Naive thymus-derived CD4-positive, alpha-beta T cell (primary cell): ENCODE measurements at regions of chrX and their contacts with region 1.

Region 1: DNA sequence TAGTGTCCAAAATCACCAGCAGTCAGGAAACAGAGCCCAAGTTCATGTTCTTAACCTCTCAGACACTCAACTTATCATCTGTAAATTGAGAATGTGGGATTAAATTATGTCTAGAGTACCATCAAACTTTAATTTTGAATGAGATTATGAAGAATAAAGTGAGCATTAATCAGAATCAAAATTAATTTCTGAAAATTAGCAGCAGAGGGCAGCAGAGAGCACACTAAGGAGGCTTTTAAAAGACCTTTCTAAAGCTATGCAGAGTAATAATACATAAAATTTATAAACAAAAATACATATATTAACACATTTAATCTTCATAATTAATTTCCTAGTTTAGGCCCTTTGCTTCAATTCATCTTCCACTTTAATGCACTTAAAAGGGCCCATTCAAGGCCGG is 7.1 kb downstream of the TASL start:
- DNase-seq: peak in 4 of 9 donors; percentile 13 to 33 (median 28)
- ATAC-seq: peak; percentile 56
- H3K4me3 ChIP-seq: no peak overlapping the region
- H3K4me3 Mint-ChIP-seq: no peak overlapping the region
- H3K27ac ChIP-seq: no peak overlapping the region
- H3K27ac Mint-ChIP-seq: peak overlapping the region in 1 of 9 donors; percentile 42
- H3K4me1 ChIP-seq: no peaks in the 10 kb centered on the region
- H3K4me1 Mint-ChIP-seq: peaks cover 9 to 32% (median 17%) of the 10 kb centered on the region in 7 donors
- H3K27me3 ChIP-seq: no peaks in the 10 kb centered on the region
- H3K27me3 Mint-ChIP-seq: no peaks in the 10 kb centered on the region

Region 2: GRCh38 chrX:30593435-30594200 is 23.1 kb after region 1 on chrX:
- CTCF ChIA-PET with region 1: interaction called, 16 read pairs
- POLR2A ChIA-PET with region 1: no interaction called
- intact Hi-C with region 1: loop called (anchors 1 kb)
- DNase-seq: peak in 4 of 9 donors; percentile 24 to 39 (median 25)
- ATAC-seq: no peak
- H3K4me3 ChIP-seq: no peak overlapping the region
- H3K4me3 Mint-ChIP-seq: peak overlapping the region in 1 of 10 donors; percentile 1
- H3K27ac ChIP-seq: no peak overlapping the region
- H3K27ac Mint-ChIP-seq: no peak overlapping the region
- H3K4me1 ChIP-seq: no peaks in the 10 kb centered on the region
- H3K4me1 Mint-ChIP-seq: peaks cover 0 to 22% (median 4%) of the 10 kb centered on the region in 7 donors
- H3K27me3 ChIP-seq: no peaks in the 10 kb centered on the region
- H3K27me3 Mint-ChIP-seq: peaks cover 0 to 3% (median 0%) of the 10 kb centered on the region in 5 donors

Region 3: GRCh38 chrX:30635630-30636029 is 65.1 kb after region 1 on chrX:
- CTCF ChIA-PET with region 1: no interaction called
- POLR2A ChIA-PET with region 1: no interaction called
- intact Hi-C with region 1: no loop called
- DNase-seq: peak in 1 of 9 donors; percentile 14
- ATAC-seq: peak; percentile 46
- H3K4me3 ChIP-seq: no peak overlapping the region
- H3K4me3 Mint-ChIP-seq: no peak overlapping the region
- H3K27ac ChIP-seq: no peak overlapping the region
- H3K27ac Mint-ChIP-seq: no peak overlapping the region
- H3K4me1 ChIP-seq: no peaks in the 10 kb centered on the region
- H3K4me1 Mint-ChIP-seq: no peaks in the 10 kb centered on the region
- H3K27me3 ChIP-seq: no peaks in the 10 kb centered on the region
- H3K27me3 Mint-ChIP-seq: no peaks in the 10 kb centered on the region

Region 4: GRCh38 chrX:30713061-30713525 is 142.6 kb after region 1 on chrX:
- CTCF ChIA-PET with region 1: interaction called, 3 read pairs
- POLR2A ChIA-PET with region 1: no interaction called
- intact Hi-C with region 1: loop called in 1 of 2 experiments (anchors 1 kb)
- DNase-seq: peak in 6 of 9 donors; percentile 1 to 43 (median 16)
- ATAC-seq: peak; percentile 63
- H3K4me3 ChIP-seq: no peak overlapping the region
- H3K4me3 Mint-ChIP-seq: peak overlapping the region in 1 of 10 donors; percentile 73
- H3K27ac ChIP-seq: no peak overlapping the region
- H3K27ac Mint-ChIP-seq: peak overlapping the region in 2 of 9 donors; percentile 62 to 96
- H3K4me1 ChIP-seq: no peaks in the 10 kb centered on the region
- H3K4me1 Mint-ChIP-seq: peaks cover 0 to 60% (median 6%) of the 10 kb centered on the region in 7 donors
- H3K27me3 ChIP-seq: no peaks in the 10 kb centered on the region
- H3K27me3 Mint-ChIP-seq: no peaks in the 10 kb centered on the region

Region 5: DNA sequence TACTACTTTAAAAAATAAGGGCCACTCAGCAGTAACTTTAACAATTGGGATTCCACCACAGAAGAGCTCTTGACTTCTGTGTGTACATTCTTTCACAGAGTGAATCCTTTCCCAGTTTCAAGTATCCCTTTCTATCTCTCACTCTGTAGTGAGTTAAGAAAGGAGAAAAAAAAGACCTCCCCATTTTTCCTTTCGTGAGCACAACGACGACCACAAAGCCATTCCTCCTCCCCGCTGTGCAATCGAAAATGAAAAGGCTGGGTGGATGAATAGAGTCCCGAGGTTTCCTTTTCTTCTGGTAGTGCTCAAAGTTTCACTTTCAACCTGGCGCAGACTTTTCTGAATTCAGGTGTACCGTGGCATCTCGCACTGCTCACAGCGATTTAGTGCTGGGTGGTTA is 260.6 kb after region 1 on chrX:
- CTCF ChIA-PET with region 1: no interaction called
- POLR2A ChIA-PET with region 1: no interaction called
- intact Hi-C with region 1: loop called in 1 of 2 experiments (anchors 10 kb)
- DNase-seq: peak in 8 of 9 donors; percentile 11 to 34 (median 22)
- ATAC-seq: peak; percentile 55
- H3K4me3 ChIP-seq: no peak overlapping the region
- H3K4me3 Mint-ChIP-seq: peak overlapping the region; percentile 72 to 86 (median 82)
- H3K27ac ChIP-seq: peak overlapping the region; percentile 64
- H3K27ac Mint-ChIP-seq: peak overlapping the region; percentile 84 to 95 (median 93)
- H3K4me1 ChIP-seq: no peaks in the 10 kb centered on the region
- H3K4me1 Mint-ChIP-seq: peaks cover 8 to 49% (median 38%) of the 10 kb centered on the region in 7 donors
- H3K27me3 ChIP-seq: no peaks in the 10 kb centered on the region
- H3K27me3 Mint-ChIP-seq: no peaks in the 10 kb centered on the region

Region 6: DNA sequence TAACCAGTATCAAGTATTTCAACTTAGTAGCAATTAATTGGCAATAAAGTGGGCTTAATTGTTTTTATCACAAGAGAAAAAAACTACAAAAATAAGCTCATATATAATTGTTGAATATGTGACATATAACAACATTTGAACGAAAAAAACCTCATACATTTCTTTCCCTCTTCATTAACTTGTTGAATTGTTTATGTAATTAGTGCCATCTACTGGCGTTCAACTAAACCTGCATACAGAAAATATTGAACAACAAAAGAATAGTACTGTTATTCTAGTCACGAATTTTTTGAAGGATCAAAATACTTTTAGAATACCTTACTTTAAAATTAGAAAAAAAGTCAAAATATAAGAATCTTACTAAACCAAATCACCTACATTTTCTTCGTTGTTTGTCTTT is 1087.9 kb after region 1 on chrX:
- CTCF ChIA-PET with region 1: no interaction called
- POLR2A ChIA-PET with region 1: no interaction called
- intact Hi-C with region 1: loop called in 1 of 2 experiments (anchors 5 kb)
- DNase-seq: peak in 1 of 9 donors; percentile 4
- ATAC-seq: no peak
- H3K4me3 ChIP-seq: no peak overlapping the region
- H3K4me3 Mint-ChIP-seq: no peak overlapping the region
- H3K27ac ChIP-seq: no peak overlapping the region
- H3K27ac Mint-ChIP-seq: no peak overlapping the region
- H3K4me1 ChIP-seq: no peaks in the 10 kb centered on the region
- H3K4me1 Mint-ChIP-seq: no peaks in the 10 kb centered on the region
- H3K27me3 ChIP-seq: no peaks in the 10 kb centered on the region
- H3K27me3 Mint-ChIP-seq: no peaks in the 10 kb centered on the region